ENCODE measurements at regions of chr3 and their contacts with region 1.

Region 1: DNA sequence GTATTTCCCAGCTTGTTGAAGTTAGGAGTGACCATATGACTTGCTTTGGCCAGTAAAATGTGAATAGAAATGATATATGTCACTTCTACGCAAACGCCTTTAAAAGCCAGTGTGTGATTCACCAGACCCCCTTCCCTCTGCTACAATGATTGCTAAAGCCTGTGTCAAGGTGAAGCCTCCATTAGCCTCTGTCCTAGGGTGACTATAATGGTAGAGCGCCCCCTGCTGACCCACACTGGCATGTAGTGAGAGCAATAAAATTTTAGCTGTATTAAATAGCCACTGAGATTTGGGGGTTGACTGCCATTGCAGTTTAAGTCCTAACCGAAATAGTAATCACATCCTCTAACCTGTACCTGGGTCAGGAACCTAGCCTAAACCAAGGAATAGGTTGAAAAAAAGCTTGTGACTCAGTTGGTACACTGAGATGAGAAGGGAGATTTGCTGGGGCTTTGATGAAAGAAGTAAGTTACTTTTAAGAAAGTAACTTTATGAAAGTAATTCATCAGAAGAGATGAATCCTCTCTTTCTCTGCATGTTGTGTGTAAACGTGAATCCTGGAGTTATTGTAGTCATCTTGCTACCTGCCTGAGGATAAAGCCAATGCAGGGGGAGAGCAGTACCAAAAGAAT is 52.6 kb downstream of the GTF2E1 start:
- DNase-seq: peak; percentile 92
- H3K4me3 ChIP-seq: no peak overlapping the region
- H3K27ac ChIP-seq: no peak overlapping the region
- H3K4me1 ChIP-seq: no peaks in the 10 kb centered on the region
- H3K27me3 ChIP-seq: no peaks in the 10 kb centered on the region
- CTCF ChIP-seq: peak; percentile 82 to 87 (median 84)
- POLR2A ChIP-seq: no peak

Region 2: GRCh38 chr3:120245386-120245785 is 549.7 kb before region 1 on chr3:
- intact Hi-C with region 1: loop called (anchors 10 kb)
- DNase-seq: no peak
- H3K4me3 ChIP-seq: no peak overlapping the region
- H3K27ac ChIP-seq: no peak overlapping the region
- H3K4me1 ChIP-seq: no peaks in the 10 kb centered on the region
- H3K27me3 ChIP-seq: no peaks in the 10 kb centered on the region
- CTCF ChIP-seq: no peak
- POLR2A ChIP-seq: no peak

Region 3: GRCh38 chr3:120558771-120559241 is 236.3 kb before region 1 on chr3:
- intact Hi-C with region 1: loop called (anchors 5 kb)
- DNase-seq: peak; percentile 95
- H3K4me3 ChIP-seq: peak overlapping the region; percentile 43 to 62
- H3K27ac ChIP-seq: peak overlapping the region; percentile 75 to 89
- H3K4me1 ChIP-seq: peaks cover 53% of the 10 kb centered on the region
- H3K27me3 ChIP-seq: no peaks in the 10 kb centered on the region
- CTCF ChIP-seq: peak; percentile 99 to 100 (median 100)
- POLR2A ChIP-seq: no peak

Measured in testis (tissue), 5 donors.